ENCODE measurements at regions of chr15 and their contacts with region 1.

Region 1: GRCh38 chr15:67164401-67164791 is 90.1 kb downstream of the AAGAB start:
- DNase-seq: no peak
- H3K4me3 ChIP-seq: no peak overlapping the region
- H3K27ac ChIP-seq: peak overlapping the region; percentile 96
- H3K27me3 ChIP-seq: no peaks in the 10 kb centered on the region
- CTCF ChIP-seq: no peak

Region 2: GRCh38 chr15:67050062-67050461 is 114.3 kb before region 1 on chr15:
- CTCF ChIA-PET with region 1: no interaction called
- POLR2A ChIA-PET with region 1: no interaction called
- DNase-seq: no peak
- H3K4me3 ChIP-seq: no peak overlapping the region
- H3K27ac ChIP-seq: peak overlapping the region; percentile 100
- H3K27me3 ChIP-seq: no peaks in the 10 kb centered on the region
- CTCF ChIP-seq: no peak

Region 3: GRCh38 chr15:67146875-67147381 is 17.5 kb before region 1 on chr15:
- CTCF ChIA-PET with region 1: interaction called, 3 read pairs
- POLR2A ChIA-PET with region 1: interaction called, 11 read pairs
- DNase-seq: peak; percentile 88
- H3K4me3 ChIP-seq: no peak overlapping the region
- H3K27ac ChIP-seq: peak overlapping the region; percentile 99
- H3K27me3 ChIP-seq: no peaks in the 10 kb centered on the region
- CTCF ChIP-seq: no peak

Region 4: DNA sequence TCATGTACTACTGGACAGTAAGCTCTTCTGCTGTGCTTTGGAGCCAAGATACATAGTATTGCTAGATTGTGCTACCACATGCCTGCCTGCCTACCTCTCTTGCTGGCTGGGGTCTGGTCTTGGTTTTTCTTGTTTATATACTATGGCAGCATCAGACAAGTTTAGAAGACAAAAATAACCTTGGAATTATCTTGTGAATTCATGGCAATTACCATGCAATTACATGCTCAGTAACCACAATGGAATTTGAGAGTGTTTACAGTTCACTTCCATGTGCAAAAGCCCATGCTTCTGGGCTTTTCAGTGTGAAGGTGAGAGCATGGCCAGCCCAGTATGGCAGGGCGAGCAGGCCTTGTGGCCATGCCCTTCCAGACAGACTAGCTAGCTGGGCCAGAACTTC is 308.6 kb after region 1 on chr15:
- CTCF ChIA-PET with region 1: no interaction called
- POLR2A ChIA-PET with region 1: interaction called, 12 read pairs
- DNase-seq: peak; percentile 29
- H3K4me3 ChIP-seq: no peak overlapping the region
- H3K27ac ChIP-seq: no peak overlapping the region
- H3K27me3 ChIP-seq: no peaks in the 10 kb centered on the region
- CTCF ChIP-seq: no peak

Measured in AG04450 (cell line).